Activated CD4-positive, alpha-beta T cell treated with anti-CD3 and anti-CD28 coated beads, Interleukin-2, amount 10 ng/mL, durations not matched to agents 7 days and 5 days (primary cell): ENCODE measurements at regions of chr1 and their contacts with region 1.

Region 1: GRCh38 chr1:108913105-108913948 is 36.5 kb downstream of the GPSM2 start:
- DNase-seq: no peak
- H3K4me3 Mint-ChIP-seq: no peak overlapping the region
- H3K27ac Mint-ChIP-seq: no peak overlapping the region
- H3K4me1 Mint-ChIP-seq: no peaks in the 10 kb centered on the region
- H3K27me3 Mint-ChIP-seq: no peaks in the 10 kb centered on the region

Region 2: DNA sequence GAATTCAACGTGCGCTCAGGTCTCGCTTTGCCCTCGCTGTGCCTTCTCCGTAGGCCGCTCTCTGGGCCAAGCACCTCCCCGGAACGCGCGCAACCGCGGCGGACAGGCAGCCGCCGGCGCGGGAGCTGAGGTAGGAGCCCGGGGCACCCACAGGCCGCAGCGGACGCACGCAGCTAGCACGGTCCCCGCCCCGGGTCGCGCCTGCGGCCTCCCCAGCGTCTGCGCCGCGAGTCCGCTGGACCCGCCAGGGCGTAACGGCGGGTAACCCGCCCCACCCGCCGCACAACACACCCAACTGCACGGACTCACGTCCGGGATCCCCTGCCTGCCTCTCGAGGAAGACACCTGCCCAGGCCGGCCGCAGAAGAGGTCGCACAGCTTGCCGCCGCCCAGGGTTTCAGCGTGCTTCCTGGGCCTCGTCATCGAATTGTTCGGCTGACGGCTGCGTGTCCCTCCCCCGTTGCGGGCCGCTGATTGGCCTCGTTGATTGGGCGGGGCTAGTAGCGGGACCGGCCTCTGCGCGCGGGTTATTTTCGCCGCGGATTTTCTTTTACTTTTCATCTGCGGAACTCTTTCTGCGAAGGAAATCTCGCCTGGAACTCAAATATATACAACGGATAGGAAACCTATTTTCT is 49.8 kb after region 1 on chr1 and contains the start of gene CLCC1:
- CTCF ChIA-PET with region 1: no interaction called
- POLR2A ChIA-PET with region 1: interaction called, 12 read pairs
- DNase-seq: peak; percentile 96
- H3K4me3 Mint-ChIP-seq: peak within 1 kb of the TSS; percentile 81
- H3K27ac Mint-ChIP-seq: peak within 1 kb of the TSS; percentile 96
- H3K4me1 Mint-ChIP-seq: peaks cover 35% of the 10 kb centered on the region
- H3K27me3 Mint-ChIP-seq: peaks cover 6% of the 10 kb centered on the region
- total RNA-seq, gene CLCC1: 18.7 to 20.4 TPM

Region 3: DNA sequence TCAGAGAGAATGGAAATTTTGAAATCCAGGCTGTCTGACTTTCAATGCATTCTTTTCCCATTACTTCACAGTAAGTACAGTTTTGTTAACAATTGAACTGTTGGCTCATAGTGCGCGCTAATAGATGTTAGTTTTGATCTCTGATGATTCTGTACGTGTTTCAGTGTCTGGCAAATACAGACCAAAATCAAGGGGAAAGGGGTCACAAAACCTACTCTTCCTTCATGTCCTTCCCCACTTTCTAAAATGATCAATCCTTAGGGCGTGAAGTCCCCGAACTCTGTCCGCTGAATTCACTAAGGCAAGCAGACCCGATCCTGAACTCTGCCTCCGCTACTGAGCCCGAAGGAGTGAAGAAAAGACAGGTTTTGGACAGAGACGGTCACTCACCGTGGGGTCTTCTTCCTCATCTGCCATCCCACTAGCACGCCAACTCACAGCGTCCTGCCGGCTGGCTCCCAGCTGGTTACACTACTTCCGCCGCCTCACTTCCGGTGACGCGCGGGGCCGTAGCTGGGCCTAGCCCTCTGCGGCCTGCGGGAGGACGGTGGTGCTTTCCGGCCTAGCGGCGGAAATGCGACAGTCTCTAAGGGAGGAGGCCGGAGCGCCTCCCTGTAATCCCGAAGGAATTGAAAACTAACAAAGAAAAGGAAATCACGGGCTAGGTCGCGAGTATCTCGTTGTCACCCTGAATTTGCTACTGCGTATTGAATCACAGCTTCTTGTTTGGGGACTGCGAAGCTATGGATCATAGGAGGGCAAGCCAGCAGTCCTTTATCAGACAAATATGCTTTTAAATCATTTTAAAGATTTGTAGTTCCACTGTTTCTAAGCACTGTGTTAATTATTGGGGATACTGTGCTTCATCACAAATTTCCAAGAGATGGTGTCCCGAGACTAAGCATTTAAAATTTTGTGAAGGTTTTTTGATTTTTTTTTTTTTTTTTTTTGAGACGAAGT is 162.5 kb after region 1 on chr1 and contains the start of gene TAF13:
- CTCF ChIA-PET with region 1: no interaction called
- POLR2A ChIA-PET with region 1: no interaction called
- DNase-seq: peak; percentile 88
- H3K4me3 Mint-ChIP-seq: peak within 1 kb of the TSS; percentile 89
- H3K27ac Mint-ChIP-seq: peak within 1 kb of the TSS; percentile 94
- H3K4me1 Mint-ChIP-seq: peaks cover 20% of the 10 kb centered on the region
- H3K27me3 Mint-ChIP-seq: no peaks in the 10 kb centered on the region
- total RNA-seq, gene TAF13: 16.0 to 17.5 TPM